Breast epithelium (tissue), 4 donors: ENCODE measurements at regions of chr4 and their contacts with region 1.

Region 1: DNA sequence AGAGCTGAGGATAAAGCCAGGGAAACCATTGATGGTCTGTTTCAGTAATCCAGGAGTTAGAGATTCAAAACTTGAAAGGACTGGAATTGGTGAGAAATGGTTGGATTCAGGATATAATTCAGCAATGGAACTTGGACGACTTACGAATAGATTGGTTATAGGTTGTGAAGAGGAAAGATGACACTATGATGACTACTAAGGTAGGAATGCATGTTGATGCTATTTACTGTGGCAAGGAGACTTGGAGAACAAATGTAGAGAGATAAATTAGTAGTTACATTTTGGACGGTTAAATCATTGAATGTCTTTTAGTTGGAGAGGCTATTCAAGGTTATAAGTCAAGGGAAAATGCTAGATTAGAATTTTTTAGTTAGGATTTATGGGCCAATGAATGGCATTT is 365.4 kb upstream of the TECRL start:
- DNase-seq: no peak
- H3K4me3 ChIP-seq: no peak overlapping the region
- H3K27ac ChIP-seq: no peak overlapping the region
- H3K4me1 ChIP-seq: no peaks in the 10 kb centered on the region
- H3K27me3 ChIP-seq: no peaks in the 10 kb centered on the region
- CTCF ChIP-seq: no peak
- POLR2A ChIP-seq: no peak

Region 2: GRCh38 chr4:63325140-63325539 is 1449.5 kb before region 1 on chr4:
- intact Hi-C with region 1: no loop called
- DNase-seq: no peak
- H3K4me3 ChIP-seq: no peak overlapping the region
- H3K27ac ChIP-seq: no peak overlapping the region
- H3K4me1 ChIP-seq: no peaks in the 10 kb centered on the region
- H3K27me3 ChIP-seq: no peaks in the 10 kb centered on the region
- CTCF ChIP-seq: no peak
- POLR2A ChIP-seq: no peak

Region 3: DNA sequence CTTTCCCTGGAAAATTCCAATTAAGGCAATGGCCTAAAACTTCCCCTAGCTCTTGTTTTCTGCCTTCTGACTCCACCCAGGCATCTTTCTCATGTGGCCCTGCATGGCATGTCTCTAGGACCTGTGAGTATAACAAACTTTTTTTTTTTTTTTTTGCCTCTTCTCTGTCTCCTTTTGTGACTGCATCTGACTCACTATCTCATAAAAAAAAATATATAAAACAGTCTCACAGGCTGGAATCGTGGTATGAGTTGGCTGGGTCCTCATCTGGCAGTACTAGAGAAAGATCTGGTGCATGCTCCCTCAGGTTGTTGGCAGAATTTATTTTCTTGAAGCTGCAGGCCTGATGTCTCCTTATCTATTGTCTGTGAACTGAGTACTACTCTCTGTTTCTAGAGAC is 679.2 kb before region 1 on chr4:
- intact Hi-C with region 1: no loop called
- DNase-seq: no peak
- H3K4me3 ChIP-seq: no peak overlapping the region
- H3K27ac ChIP-seq: no peak overlapping the region
- H3K4me1 ChIP-seq: no peaks in the 10 kb centered on the region
- H3K27me3 ChIP-seq: no peaks in the 10 kb centered on the region
- CTCF ChIP-seq: no peak
- POLR2A ChIP-seq: no peak

Region 4: DNA sequence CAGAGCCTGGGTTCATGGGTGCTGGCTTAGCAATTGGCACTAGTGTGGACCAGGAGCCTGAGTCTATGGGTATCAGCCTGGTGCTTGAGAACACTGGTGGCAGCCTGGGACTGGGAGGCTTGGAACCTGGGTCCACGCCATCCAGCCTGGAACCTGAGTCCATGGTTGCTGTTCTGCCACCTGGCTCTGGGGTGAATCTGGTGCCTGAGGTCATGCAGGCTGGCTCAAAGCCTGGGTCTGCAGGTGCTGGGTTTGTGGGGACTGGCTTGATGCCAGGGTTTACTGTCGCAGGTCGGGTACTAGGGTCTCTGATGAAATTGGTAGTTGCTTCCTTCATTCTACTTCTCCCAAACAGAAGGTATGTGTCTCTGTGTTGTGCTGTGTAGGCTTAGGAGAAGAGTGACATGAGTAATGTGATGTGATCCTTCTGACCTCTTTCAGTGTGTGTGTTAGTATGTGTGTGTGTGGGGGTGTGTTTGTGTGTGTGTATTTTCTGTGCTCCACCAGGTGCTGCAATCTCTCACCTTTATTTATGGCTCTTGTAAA is 1412.6 kb after region 1 on chr4:
- intact Hi-C with region 1: loop called (anchors 5 kb)
- DNase-seq: no peak
- H3K4me3 ChIP-seq: no peak overlapping the region
- H3K27ac ChIP-seq: no peak overlapping the region
- H3K4me1 ChIP-seq: no peaks in the 10 kb centered on the region
- H3K27me3 ChIP-seq: no peaks in the 10 kb centered on the region
- CTCF ChIP-seq: no peak
- POLR2A ChIP-seq: no peak